ENCODE measurements at regions of chr3 and their contacts with region 1.

Region 1: GRCh38 chr3:107496855-107497254 is 25.9 kb upstream of the BBX start:
- DNase-seq: no peak
- ATAC-seq: no peak
- H3K4me3 Mint-ChIP-seq: no peak overlapping the region
- H3K27ac Mint-ChIP-seq: no peak overlapping the region
- H3K4me1 Mint-ChIP-seq: no peaks in the 10 kb centered on the region
- H3K27me3 Mint-ChIP-seq: no peaks in the 10 kb centered on the region; the same call in 1 of the 2 replicates
- CTCF ChIP-seq: no peak

Region 2: DNA sequence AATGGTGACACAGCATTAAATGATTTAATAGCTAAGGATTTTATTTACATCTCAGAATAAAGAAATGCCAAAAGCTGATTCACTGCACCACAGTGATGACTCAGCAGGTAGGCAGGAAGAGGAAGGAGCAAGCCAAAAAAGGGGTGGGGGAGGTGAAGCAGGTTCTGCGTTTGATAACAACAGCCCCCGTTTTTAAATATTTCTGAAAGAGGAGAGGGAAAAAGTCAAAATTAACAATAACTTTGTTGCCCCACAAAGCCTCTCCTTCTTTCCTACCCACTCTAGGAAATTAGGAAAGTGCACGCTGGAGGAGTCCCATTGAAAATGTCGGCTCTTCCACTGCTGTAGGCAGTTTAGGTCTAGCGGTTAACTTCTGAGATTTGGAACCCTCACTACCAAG is 129.5 kb before region 1 on chr3:
- CTCF ChIA-PET with region 1: no interaction called
- POLR2A ChIA-PET with region 1: no interaction called
- DNase-seq: no peak
- ATAC-seq: peak; percentile 43; the same call in 1 of the 2 replicates
- H3K4me3 Mint-ChIP-seq: no peak overlapping the region
- H3K27ac Mint-ChIP-seq: 0 out of 2 replicates have a peak overlapping the region, but pooled peaks have one; percentile 9
- H3K4me1 Mint-ChIP-seq: peaks cover 50% of the 10 kb centered on the region
- H3K27me3 Mint-ChIP-seq: no peaks in the 10 kb centered on the region
- CTCF ChIP-seq: no peak

Region 3: GRCh38 chr3:107414325-107414964 is 82.4 kb before region 1 on chr3:
- CTCF ChIA-PET with region 1: no interaction called
- POLR2A ChIA-PET with region 1: no interaction called
- DNase-seq: no peak
- ATAC-seq: no peak
- H3K4me3 Mint-ChIP-seq: no peak overlapping the region
- H3K27ac Mint-ChIP-seq: no peak overlapping the region
- H3K4me1 Mint-ChIP-seq: no peaks in the 10 kb centered on the region
- H3K27me3 Mint-ChIP-seq: no peaks in the 10 kb centered on the region
- CTCF ChIP-seq: no peak

Region 4: GRCh38 chr3:107458871-107459270 is 38.0 kb before region 1 on chr3:
- CTCF ChIA-PET with region 1: no interaction called
- POLR2A ChIA-PET with region 1: no interaction called
- DNase-seq: no peak
- ATAC-seq: no peak
- H3K4me3 Mint-ChIP-seq: no peak overlapping the region
- H3K27ac Mint-ChIP-seq: no peak overlapping the region
- H3K4me1 Mint-ChIP-seq: peaks cover 14% of the 10 kb centered on the region
- H3K27me3 Mint-ChIP-seq: no peaks in the 10 kb centered on the region
- CTCF ChIP-seq: no peak

Region 5: GRCh38 chr3:107555359-107555758 is 58.5 kb after region 1 on chr3:
- CTCF ChIA-PET with region 1: no interaction called
- POLR2A ChIA-PET with region 1: interaction called, 10 read pairs
- DNase-seq: no peak
- ATAC-seq: no peak
- H3K4me3 Mint-ChIP-seq: no peak overlapping the region
- H3K27ac Mint-ChIP-seq: no peak overlapping the region
- H3K4me1 Mint-ChIP-seq: peaks cover 3% of the 10 kb centered on the region; the same call in 1 of the 2 replicates
- H3K27me3 Mint-ChIP-seq: no peaks in the 10 kb centered on the region
- CTCF ChIP-seq: no peak

Region 6: DNA sequence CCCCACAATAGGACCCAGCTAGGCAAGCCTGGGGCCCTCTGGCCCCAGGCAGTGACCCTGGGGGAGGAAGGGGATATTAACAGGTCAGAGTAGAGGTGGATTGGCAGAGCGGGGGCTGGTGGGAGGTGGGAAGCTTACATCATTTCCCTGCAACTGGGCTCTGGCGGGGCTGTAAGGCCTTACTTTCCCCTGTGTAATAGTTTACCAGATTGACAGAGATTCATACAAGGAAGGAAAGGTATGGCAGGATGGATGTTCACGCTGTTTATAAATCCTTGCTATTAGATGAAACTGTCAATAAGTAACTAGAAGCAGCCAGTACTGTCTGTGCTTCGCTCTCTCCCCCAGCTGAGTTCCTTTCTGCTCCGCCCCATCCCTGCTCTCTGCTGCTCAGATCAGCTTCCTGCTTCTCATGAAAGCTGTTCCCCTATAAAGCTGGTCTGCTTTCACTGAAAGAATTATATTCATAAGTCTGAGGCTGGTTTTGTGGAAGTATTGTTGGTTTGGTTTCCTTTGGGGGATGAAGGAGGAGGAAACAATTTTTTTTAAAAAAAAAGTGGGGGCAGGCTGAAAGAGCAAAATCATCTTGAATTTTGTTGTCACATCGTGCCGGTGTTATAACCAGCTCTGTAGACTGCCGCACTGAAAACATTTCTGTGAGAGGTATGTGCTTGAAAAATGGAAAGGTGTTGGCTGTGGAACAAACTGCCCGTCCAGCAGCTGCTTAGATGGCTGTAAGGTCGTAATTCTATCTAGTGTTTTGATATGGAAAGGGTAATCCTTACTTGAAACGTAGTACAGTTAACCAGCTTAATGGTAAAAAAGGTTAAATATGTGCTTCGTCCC is 102.3 kb after region 1 on chr3:
- CTCF ChIA-PET with region 1: no interaction called
- POLR2A ChIA-PET with region 1: no interaction called
- DNase-seq: peak; percentile 47
- ATAC-seq: peak; percentile 93
- H3K4me3 Mint-ChIP-seq: peak overlapping the region; percentile 50
- H3K27ac Mint-ChIP-seq: peak overlapping the region; percentile 86
- H3K4me1 Mint-ChIP-seq: peaks cover 60% of the 10 kb centered on the region
- H3K27me3 Mint-ChIP-seq: no peaks in the 10 kb centered on the region
- CTCF ChIP-seq: no peak

Measured in WTC11 (cell line).